Naive thymus-derived CD4-positive, alpha-beta T cell (primary cell): ENCODE measurements at regions of chrX and their contacts with region 1.

Region 1: GRCh38 chrX:124211312-124211942 is 121.0 kb upstream of the TEX13D start:
- DNase-seq: peak in 7 of 9 donors; percentile 27 to 63 (median 51)
- ATAC-seq: peak; percentile 83
- H3K4me3 ChIP-seq: no peak overlapping the region
- H3K4me3 Mint-ChIP-seq: no peak overlapping the region
- H3K27ac ChIP-seq: no peak overlapping the region
- H3K27ac Mint-ChIP-seq: peak overlapping the region in 1 of 9 donors; percentile 21
- H3K4me1 ChIP-seq: peaks cover 20 to 31% of the 10 kb centered on the region in 2 donors
- H3K4me1 Mint-ChIP-seq: peaks cover 19 to 51% (median 45%) of the 10 kb centered on the region in 7 donors
- H3K27me3 ChIP-seq: no peaks in the 10 kb centered on the region
- H3K27me3 Mint-ChIP-seq: peaks cover 0 to 3% (median 0%) of the 10 kb centered on the region in 5 donors

Region 2: DNA sequence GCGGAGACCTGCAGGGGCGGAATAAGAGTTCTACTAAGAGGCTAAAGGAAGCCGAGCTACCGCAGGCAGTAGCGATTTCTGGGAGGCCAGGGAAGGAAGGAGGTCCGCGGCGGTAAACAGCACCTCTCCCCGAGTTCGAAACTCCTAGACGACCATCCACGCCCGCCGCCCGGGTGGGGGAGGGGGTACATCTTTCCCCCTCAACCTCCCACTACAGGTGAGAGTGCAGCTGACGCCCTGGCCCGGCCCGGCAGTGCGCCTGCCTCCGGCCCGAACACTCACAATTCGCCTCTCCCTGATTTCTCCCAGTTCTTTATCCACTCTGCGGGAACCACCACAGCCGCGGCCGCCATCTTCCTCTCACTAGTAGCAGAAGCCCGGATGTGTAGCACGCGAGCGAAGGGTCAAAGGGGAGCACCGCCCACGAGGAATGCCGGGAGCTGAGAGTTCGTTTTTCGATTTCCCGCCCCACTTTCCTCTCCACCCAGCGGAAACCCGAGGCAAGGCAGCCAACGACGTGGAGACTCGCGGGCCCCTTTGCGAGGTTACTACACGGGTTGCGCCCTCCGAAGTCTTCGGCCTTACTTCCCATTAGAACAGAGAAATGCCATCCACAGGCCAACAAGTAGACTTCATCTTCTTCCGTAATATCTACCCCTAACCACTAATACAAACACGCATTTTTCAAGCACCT is 478.6 kb before region 1 on chrX and contains the start of gene THOC2:
- CTCF ChIA-PET with region 1: no interaction called
- POLR2A ChIA-PET with region 1: no interaction called
- intact Hi-C with region 1: loop called in 1 of 2 experiments (anchors 10 kb)
- DNase-seq: peak; percentile 47 to 77 (median 69)
- ATAC-seq: peak; percentile 97
- H3K4me3 ChIP-seq: peak within 1 kb of the TSS; percentile 82
- H3K4me3 Mint-ChIP-seq: peak within 1 kb of the TSS; percentile 84 to 98 (median 94)
- H3K27ac ChIP-seq: peak within 1 kb of the TSS; percentile 83
- H3K27ac Mint-ChIP-seq: peak within 1 kb of the TSS; percentile 84 to 95 (median 93)
- H3K4me1 ChIP-seq: peaks cover 0 to 9% of the 10 kb centered on the region in 2 donors
- H3K4me1 Mint-ChIP-seq: peaks cover 14 to 49% (median 40%) of the 10 kb centered on the region in 7 donors
- H3K27me3 ChIP-seq: no peaks in the 10 kb centered on the region
- H3K27me3 Mint-ChIP-seq: no peaks in the 10 kb centered on the region
- total RNA-seq, gene THOC2: 78.7 to 124 (median 92.4) TPM

Region 3: GRCh38 chrX:124086411-124086810 is 125.0 kb before region 1 on chrX:
- CTCF ChIA-PET with region 1: no interaction called
- POLR2A ChIA-PET with region 1: no interaction called
- intact Hi-C with region 1: loop called (anchors 10 kb)
- DNase-seq: peak in 8 of 9 donors; percentile 21 to 78 (median 64)
- ATAC-seq: peak; percentile 97
- H3K4me3 ChIP-seq: no peak overlapping the region
- H3K4me3 Mint-ChIP-seq: peak overlapping the region in 9 of 10 donors; percentile 4 to 84 (median 68)
- H3K27ac ChIP-seq: peak overlapping the region; percentile 59
- H3K27ac Mint-ChIP-seq: peak overlapping the region; percentile 85 to 94 (median 91)
- H3K4me1 ChIP-seq: peaks cover 0 to 6% of the 10 kb centered on the region in 2 donors
- H3K4me1 Mint-ChIP-seq: peaks cover 7 to 41% (median 31%) of the 10 kb centered on the region in 7 donors
- H3K27me3 ChIP-seq: no peaks in the 10 kb centered on the region
- H3K27me3 Mint-ChIP-seq: no peaks in the 10 kb centered on the region

Region 4: DNA sequence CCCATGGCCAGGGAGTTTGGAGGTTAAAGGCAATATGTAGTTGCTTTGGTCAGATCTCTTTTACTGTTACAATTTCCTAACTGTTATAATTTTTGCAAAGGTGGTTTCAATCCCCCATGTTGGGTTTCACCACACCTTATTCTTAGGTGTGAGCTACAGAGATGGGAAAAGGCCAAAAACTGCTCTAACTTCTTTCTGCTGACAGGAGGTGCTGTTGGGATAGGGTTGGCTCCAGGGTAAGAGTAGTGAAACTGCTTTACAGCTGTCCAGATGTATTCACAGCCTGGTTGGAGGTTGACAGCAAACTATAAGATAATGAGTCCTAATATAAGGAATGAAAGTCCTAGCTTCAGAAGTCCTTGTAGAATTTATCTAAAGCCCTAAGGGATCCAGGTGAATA is 60.2 kb before region 1 on chrX:
- CTCF ChIA-PET with region 1: no interaction called
- POLR2A ChIA-PET with region 1: no interaction called
- intact Hi-C with region 1: no loop called
- DNase-seq: no peak
- ATAC-seq: no peak
- H3K4me3 ChIP-seq: no peak overlapping the region
- H3K4me3 Mint-ChIP-seq: no peak overlapping the region
- H3K27ac ChIP-seq: no peak overlapping the region
- H3K27ac Mint-ChIP-seq: no peak overlapping the region
- H3K4me1 ChIP-seq: no peaks in the 10 kb centered on the region
- H3K4me1 Mint-ChIP-seq: no peaks in the 10 kb centered on the region
- H3K27me3 ChIP-seq: no peaks in the 10 kb centered on the region
- H3K27me3 Mint-ChIP-seq: no peaks in the 10 kb centered on the region

Region 5: DNA sequence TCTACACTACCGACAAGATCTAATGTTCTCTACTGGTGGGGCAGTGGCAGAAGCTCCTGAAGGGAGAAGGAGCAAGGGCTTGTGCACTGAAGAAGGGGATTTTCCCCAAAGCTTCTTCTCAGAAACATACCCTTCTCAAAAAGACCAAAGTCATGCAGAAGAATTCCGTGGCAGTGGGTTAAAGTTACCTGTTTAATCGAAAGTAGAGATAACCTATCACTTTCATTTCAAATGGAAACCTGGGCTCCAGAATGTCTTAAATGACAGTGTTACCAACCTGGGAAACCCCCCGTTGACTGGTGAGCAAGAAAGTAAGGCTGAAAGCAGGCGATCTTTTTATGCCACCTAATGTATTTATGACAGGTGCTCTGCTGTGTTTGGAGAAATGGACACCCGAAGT is 28.5 kb after region 1 on chrX:
- CTCF ChIA-PET with region 1: no interaction called
- POLR2A ChIA-PET with region 1: no interaction called
- intact Hi-C with region 1: loop called in 1 of 2 experiments (anchors 1 kb)
- DNase-seq: peak in 3 of 9 donors; percentile 15 to 54 (median 35)
- ATAC-seq: peak; percentile 58
- H3K4me3 ChIP-seq: no peak overlapping the region
- H3K4me3 Mint-ChIP-seq: peak overlapping the region in 7 of 10 donors; percentile 12 to 60 (median 54)
- H3K27ac ChIP-seq: no peak overlapping the region
- H3K27ac Mint-ChIP-seq: peak overlapping the region in 3 of 9 donors; percentile 8 to 66 (median 34)
- H3K4me1 ChIP-seq: peaks cover 0 to 7% of the 10 kb centered on the region in 2 donors
- H3K4me1 Mint-ChIP-seq: peaks cover 8 to 47% (median 35%) of the 10 kb centered on the region in 7 donors
- H3K27me3 ChIP-seq: no peaks in the 10 kb centered on the region
- H3K27me3 Mint-ChIP-seq: peaks cover 0 to 2% (median 0%) of the 10 kb centered on the region in 5 donors

Region 6: DNA sequence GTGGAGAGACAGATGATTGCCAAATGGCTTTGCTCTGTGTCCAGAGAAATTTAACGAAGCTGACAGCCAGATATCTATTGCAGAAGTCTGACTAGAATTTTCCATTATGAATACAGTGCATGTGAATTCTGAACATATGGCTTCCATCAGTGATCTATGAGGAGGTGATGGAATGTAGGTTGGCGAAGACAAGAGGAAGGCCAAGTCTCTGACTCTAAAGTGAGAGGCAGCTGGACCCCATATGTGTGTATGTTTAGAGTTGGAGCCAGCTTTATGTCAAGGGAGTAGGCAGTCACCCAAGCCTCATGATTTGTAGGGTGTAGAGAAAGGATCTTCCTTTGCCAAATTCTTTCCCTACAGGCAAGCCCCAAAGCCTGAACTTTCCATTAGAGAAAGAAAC is 44.8 kb after region 1 on chrX:
- CTCF ChIA-PET with region 1: no interaction called
- POLR2A ChIA-PET with region 1: no interaction called
- intact Hi-C with region 1: no loop called
- DNase-seq: no peak
- ATAC-seq: no peak
- H3K4me3 ChIP-seq: no peak overlapping the region
- H3K4me3 Mint-ChIP-seq: no peak overlapping the region
- H3K27ac ChIP-seq: no peak overlapping the region
- H3K27ac Mint-ChIP-seq: no peak overlapping the region
- H3K4me1 ChIP-seq: no peaks in the 10 kb centered on the region
- H3K4me1 Mint-ChIP-seq: no peaks in the 10 kb centered on the region
- H3K27me3 ChIP-seq: no peaks in the 10 kb centered on the region
- H3K27me3 Mint-ChIP-seq: no peaks in the 10 kb centered on the region

Region 7: GRCh38 chrX:124346117-124346876 is 134.9 kb after region 1 on chrX and contains the start of gene SH2D1A:
- CTCF ChIA-PET with region 1: interaction called, 3 read pairs
- POLR2A ChIA-PET with region 1: interaction called, 10 read pairs
- intact Hi-C with region 1: loop called in 1 of 2 experiments (anchors 1 kb)
- DNase-seq: peak in 8 of 9 donors; percentile 20 to 50 (median 34)
- ATAC-seq: peak; percentile 70
- H3K4me3 ChIP-seq: peak within 1 kb of the TSS; percentile 62
- H3K4me3 Mint-ChIP-seq: peak within 1 kb of the TSS; percentile 79 to 99 (median 96)
- H3K27ac ChIP-seq: peak within 1 kb of the TSS; percentile 72
- H3K27ac Mint-ChIP-seq: peak within 1 kb of the TSS; percentile 85 to 98 (median 95)
- H3K4me1 ChIP-seq: peaks cover 36 to 47% of the 10 kb centered on the region in 2 donors
- H3K4me1 Mint-ChIP-seq: peaks cover 12 to 51% (median 44%) of the 10 kb centered on the region in 7 donors
- H3K27me3 ChIP-seq: no peaks in the 10 kb centered on the region
- H3K27me3 Mint-ChIP-seq: no peaks in the 10 kb centered on the region
- total RNA-seq, gene SH2D1A: 23.8 to 48.2 (median 37.9) TPM

Region 8: GRCh38 chrX:124378643-124379042 is 167.2 kb after region 1 on chrX:
- CTCF ChIA-PET with region 1: no interaction called
- POLR2A ChIA-PET with region 1: no interaction called
- intact Hi-C with region 1: loop called (anchors 1 to 2 kb)
- DNase-seq: no peak
- ATAC-seq: no peak
- H3K4me3 ChIP-seq: no peak overlapping the region
- H3K4me3 Mint-ChIP-seq: no peak overlapping the region
- H3K27ac ChIP-seq: no peak overlapping the region
- H3K27ac Mint-ChIP-seq: no peak overlapping the region
- H3K4me1 ChIP-seq: peaks cover 0 to 3% of the 10 kb centered on the region in 2 donors
- H3K4me1 Mint-ChIP-seq: peaks cover 6 to 39% (median 22%) of the 10 kb centered on the region in 7 donors
- H3K27me3 ChIP-seq: no peaks in the 10 kb centered on the region
- H3K27me3 Mint-ChIP-seq: no peaks in the 10 kb centered on the region

Region 9: DNA sequence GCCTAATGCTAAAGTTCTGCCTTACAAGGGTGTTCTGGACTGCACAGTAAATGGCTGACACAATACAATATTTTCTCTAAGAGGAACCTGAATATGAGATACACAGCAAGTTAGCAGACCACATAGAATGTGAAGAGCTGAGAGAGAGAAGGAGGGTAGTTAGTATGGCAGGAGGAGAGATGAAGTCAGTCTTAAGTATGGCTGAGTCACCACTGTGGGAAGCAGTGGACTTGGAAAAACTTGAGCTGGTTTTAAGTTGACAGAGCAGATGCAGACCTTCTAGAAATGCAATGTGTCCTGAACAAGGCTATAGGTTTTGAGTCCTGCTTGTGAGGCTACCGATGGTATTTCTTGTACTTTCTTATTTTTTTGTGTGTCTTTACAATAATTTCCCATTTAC is 307.5 kb after region 1 on chrX:
- CTCF ChIA-PET with region 1: no interaction called
- POLR2A ChIA-PET with region 1: no interaction called
- intact Hi-C with region 1: no loop called
- DNase-seq: no peak
- ATAC-seq: no peak
- H3K4me3 ChIP-seq: no peak overlapping the region
- H3K4me3 Mint-ChIP-seq: no peak overlapping the region
- H3K27ac ChIP-seq: no peak overlapping the region
- H3K27ac Mint-ChIP-seq: no peak overlapping the region
- H3K4me1 ChIP-seq: no peaks in the 10 kb centered on the region
- H3K4me1 Mint-ChIP-seq: no peaks in the 10 kb centered on the region
- H3K27me3 ChIP-seq: no peaks in the 10 kb centered on the region
- H3K27me3 Mint-ChIP-seq: no peaks in the 10 kb centered on the region

Region 10: DNA sequence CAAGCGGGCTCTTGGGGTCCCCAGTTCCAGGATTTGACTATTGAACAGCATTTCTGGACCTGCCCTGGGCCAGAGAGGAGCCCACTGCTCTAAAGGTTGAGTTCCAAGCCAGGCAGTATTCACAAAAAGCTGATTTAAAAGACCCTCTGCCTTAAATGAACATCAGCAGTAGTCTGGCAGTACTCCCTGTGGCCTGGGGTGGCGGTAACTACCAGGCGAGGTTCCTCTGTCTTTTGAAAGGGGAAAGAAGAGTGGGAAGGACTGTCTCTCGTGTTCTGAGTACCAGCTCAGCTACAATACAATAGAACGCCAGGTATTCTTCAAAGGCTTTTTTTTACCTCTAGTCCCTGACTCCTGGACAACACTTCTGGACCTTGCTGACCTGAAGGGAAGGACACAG is 651.9 kb after region 1 on chrX:
- CTCF ChIA-PET with region 1: no interaction called
- POLR2A ChIA-PET with region 1: no interaction called
- intact Hi-C with region 1: loop called in 1 of 2 experiments (anchors 5 kb)
- DNase-seq: no peak
- ATAC-seq: no peak
- H3K4me3 ChIP-seq: no peak overlapping the region
- H3K4me3 Mint-ChIP-seq: no peak overlapping the region
- H3K27ac ChIP-seq: no peak overlapping the region
- H3K27ac Mint-ChIP-seq: no peak overlapping the region
- H3K4me1 ChIP-seq: no peaks in the 10 kb centered on the region
- H3K4me1 Mint-ChIP-seq: no peaks in the 10 kb centered on the region
- H3K27me3 ChIP-seq: no peaks in the 10 kb centered on the region
- H3K27me3 Mint-ChIP-seq: peaks cover 0 to 16% (median 0%) of the 10 kb centered on the region in 5 donors